Activated CD8-positive, alpha-beta T cell treated with anti-CD3 and anti-CD28 coated beads for 36 hours (primary cell): ENCODE measurements at regions of chr18 and their contacts with region 1.

Region 1: DNA sequence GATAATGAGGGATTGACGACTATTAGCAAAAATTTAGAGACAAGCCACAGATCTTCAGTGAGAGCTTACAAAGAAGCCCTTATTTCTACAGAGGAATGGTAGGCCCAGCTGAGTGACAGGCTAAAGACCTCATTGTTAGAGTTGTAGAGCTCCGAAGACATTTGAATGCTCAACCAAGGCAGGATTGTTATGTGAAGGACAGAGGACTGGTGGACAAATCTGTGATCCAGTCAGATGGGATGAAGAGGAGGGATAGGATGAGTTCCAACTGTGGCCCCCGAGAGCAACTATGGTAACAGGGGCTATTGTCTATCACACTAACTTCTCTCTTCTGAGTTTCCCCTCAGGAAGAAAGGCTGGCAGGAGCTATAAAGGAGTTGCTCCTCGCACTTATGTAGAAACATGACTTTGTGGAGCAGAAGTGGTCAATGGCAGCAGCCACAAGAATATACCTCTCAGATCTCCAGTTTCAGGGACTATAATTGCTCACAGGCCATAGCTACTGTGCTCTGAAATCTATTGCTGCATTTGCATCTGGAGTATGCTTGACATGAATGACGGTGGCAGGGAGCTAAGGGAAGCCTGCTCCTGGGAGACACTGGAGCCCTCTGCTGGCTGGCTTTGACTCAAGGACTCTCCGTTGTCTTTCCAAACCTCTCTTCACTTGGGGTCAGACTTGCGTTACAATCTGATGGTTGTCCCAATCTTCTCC is 50.3 kb upstream of the GREB1L start:
- DNase-seq: peak; percentile 46
- ATAC-seq: no peak
- H3K4me3 Mint-ChIP-seq: no peak overlapping the region
- H3K27ac Mint-ChIP-seq: no peak overlapping the region
- H3K4me1 Mint-ChIP-seq: no peaks in the 10 kb centered on the region
- H3K27me3 Mint-ChIP-seq: peaks cover 10% of the 10 kb centered on the region
- CTCF ChIP-seq: no peak

Region 2: GRCh38 chr18:21179590-21180220 is 12.0 kb before region 1 on chr18:
- CTCF ChIA-PET with region 1: interaction called, 66 read pairs
- POLR2A ChIA-PET with region 1: no interaction called
- intact Hi-C with region 1: no loop called
- DNase-seq: peak; percentile 73
- ATAC-seq: peak; percentile 76
- H3K4me3 Mint-ChIP-seq: no peak overlapping the region
- H3K27ac Mint-ChIP-seq: no peak overlapping the region
- H3K4me1 Mint-ChIP-seq: peaks cover 9% of the 10 kb centered on the region
- H3K27me3 Mint-ChIP-seq: no peaks in the 10 kb centered on the region
- CTCF ChIP-seq: peak; percentile 73

Region 3: DNA sequence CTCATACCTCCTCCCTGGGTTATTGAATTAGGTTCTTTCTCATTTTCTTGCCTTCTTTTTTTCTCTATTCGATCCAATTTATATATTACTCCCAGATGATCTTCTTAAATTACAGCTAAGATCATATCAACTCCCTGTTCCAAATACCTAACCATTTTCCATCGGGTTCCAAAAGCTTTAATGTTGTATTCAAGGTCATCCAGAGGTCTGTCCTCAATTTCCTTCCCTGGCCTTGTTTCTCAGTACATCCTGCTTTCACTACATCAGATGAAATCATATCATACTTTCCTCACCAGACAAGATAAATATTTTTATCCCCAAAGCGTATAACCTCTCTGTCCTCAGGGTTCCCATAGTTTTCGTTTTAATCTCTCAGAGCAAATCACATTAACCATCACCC is 13.9 kb after region 1 on chr18:
- CTCF ChIA-PET with region 1: interaction called, 12 read pairs
- POLR2A ChIA-PET with region 1: no interaction called
- intact Hi-C with region 1: no loop called
- DNase-seq: no peak
- ATAC-seq: no peak
- H3K4me3 Mint-ChIP-seq: no peak overlapping the region
- H3K27ac Mint-ChIP-seq: no peak overlapping the region
- H3K4me1 Mint-ChIP-seq: no peaks in the 10 kb centered on the region
- H3K27me3 Mint-ChIP-seq: peaks cover 3% of the 10 kb centered on the region
- CTCF ChIP-seq: no peak

Region 4: GRCh38 chr18:21272016-21272579 is 80.3 kb after region 1 on chr18:
- CTCF ChIA-PET with region 1: no interaction called
- POLR2A ChIA-PET with region 1: no interaction called
- intact Hi-C with region 1: no loop called
- DNase-seq: no peak
- ATAC-seq: no peak
- H3K4me3 Mint-ChIP-seq: no peak overlapping the region
- H3K27ac Mint-ChIP-seq: no peak overlapping the region
- H3K4me1 Mint-ChIP-seq: no peaks in the 10 kb centered on the region
- H3K27me3 Mint-ChIP-seq: no peaks in the 10 kb centered on the region
- CTCF ChIP-seq: no peak

Region 5: DNA sequence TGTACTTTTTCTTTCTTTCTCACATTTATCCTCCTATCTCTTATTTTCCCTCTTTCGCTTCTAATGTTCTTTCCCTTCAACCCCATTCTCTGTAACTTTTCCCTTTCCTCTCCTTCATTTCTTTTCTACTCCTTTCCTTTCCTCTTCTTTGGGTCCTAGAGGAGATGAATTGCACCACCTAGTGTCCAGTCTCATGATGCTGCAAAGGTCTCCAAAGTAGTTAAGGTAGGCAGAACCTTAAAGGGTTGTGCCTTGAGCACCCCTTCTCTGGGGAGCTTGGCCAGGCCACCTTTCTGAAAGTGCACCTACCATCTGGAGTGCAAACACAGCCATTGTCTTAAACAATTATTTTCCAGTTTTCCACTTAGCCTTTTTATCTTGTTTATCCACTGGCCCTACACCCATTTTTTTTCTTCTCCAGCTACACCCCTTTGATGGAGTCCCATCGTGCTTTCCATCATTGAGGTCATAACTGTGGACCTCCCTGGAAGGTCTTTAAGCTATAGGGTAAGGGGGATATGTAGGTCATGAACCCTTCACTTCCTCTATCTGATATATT is 252.8 kb after region 1 on chr18:
- CTCF ChIA-PET with region 1: interaction called, 26 read pairs
- POLR2A ChIA-PET with region 1: no interaction called
- intact Hi-C with region 1: no loop called
- DNase-seq: peak; percentile 15
- ATAC-seq: no peak
- H3K4me3 Mint-ChIP-seq: no peak overlapping the region
- H3K27ac Mint-ChIP-seq: no peak overlapping the region
- H3K4me1 Mint-ChIP-seq: no peaks in the 10 kb centered on the region
- H3K27me3 Mint-ChIP-seq: peaks cover 10% of the 10 kb centered on the region
- CTCF ChIP-seq: peak; percentile 66

Region 6: GRCh38 chr18:21489119-21489750 is 297.5 kb after region 1 on chr18:
- CTCF ChIA-PET with region 1: interaction called, 3 read pairs
- POLR2A ChIA-PET with region 1: no interaction called
- intact Hi-C with region 1: loop called (anchors 10 kb)
- DNase-seq: peak; percentile 46
- ATAC-seq: peak; percentile 37
- H3K4me3 Mint-ChIP-seq: no peak overlapping the region
- H3K27ac Mint-ChIP-seq: no peak overlapping the region
- H3K4me1 Mint-ChIP-seq: peaks cover 1% of the 10 kb centered on the region
- H3K27me3 Mint-ChIP-seq: no peaks in the 10 kb centered on the region
- CTCF ChIP-seq: peak; percentile 90

Region 7: GRCh38 chr18:21955757-21956652 is 764.3 kb after region 1 on chr18:
- CTCF ChIA-PET with region 1: interaction called, 3 read pairs
- POLR2A ChIA-PET with region 1: no interaction called
- intact Hi-C with region 1: loop called (anchors 2 kb)
- DNase-seq: peak; percentile 84
- ATAC-seq: peak; percentile 84
- H3K4me3 Mint-ChIP-seq: no peak overlapping the region
- H3K27ac Mint-ChIP-seq: no peak overlapping the region
- H3K4me1 Mint-ChIP-seq: no peaks in the 10 kb centered on the region
- H3K27me3 Mint-ChIP-seq: peaks cover 12% of the 10 kb centered on the region
- CTCF ChIP-seq: peak; percentile 93